Activated CD8-positive, alpha-beta T cell treated with anti-CD3 and anti-CD28 coated beads for 36 hours (primary cell): ENCODE measurements at regions of chr11 and their contacts with region 1.

Region 1: DNA sequence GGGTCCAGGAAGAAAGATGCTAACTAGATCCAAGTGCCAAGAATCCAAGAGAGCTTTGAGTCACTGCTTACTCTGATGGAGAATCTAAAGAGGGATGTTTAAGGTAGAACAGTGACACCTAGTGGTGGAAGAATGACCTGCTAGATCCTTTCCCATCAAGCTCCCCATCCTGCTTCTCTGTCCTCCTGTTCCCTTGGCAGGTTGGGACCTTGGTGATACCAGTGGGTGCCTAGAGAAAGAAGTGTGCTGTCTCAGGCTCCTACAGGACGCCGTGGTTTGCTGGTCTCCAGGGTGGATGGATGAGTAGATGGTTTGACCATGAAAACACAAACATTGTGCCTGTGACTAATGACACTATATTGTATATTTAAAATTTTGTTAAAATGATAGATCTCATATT is 383.7 kb downstream of the TMEM135 start:
- DNase-seq: peak; percentile 33
- ATAC-seq: peak; percentile 58
- H3K4me3 Mint-ChIP-seq: no peak overlapping the region
- H3K27ac Mint-ChIP-seq: no peak overlapping the region
- H3K4me1 Mint-ChIP-seq: no peaks in the 10 kb centered on the region
- H3K27me3 Mint-ChIP-seq: peaks cover 2% of the 10 kb centered on the region
- CTCF ChIP-seq: peak; percentile 68

Region 2: GRCh38 chr11:87352759-87353707 is 68.4 kb before region 1 on chr11:
- CTCF ChIA-PET with region 1: interaction called, 108 read pairs
- POLR2A ChIA-PET with region 1: no interaction called
- intact Hi-C with region 1: loop called (anchors 1 kb)
- DNase-seq: peak; percentile 89
- ATAC-seq: peak; percentile 95
- H3K4me3 Mint-ChIP-seq: no peak overlapping the region
- H3K27ac Mint-ChIP-seq: no peak overlapping the region
- H3K4me1 Mint-ChIP-seq: peaks cover 12% of the 10 kb centered on the region
- H3K27me3 Mint-ChIP-seq: peaks cover 12% of the 10 kb centered on the region
- CTCF ChIP-seq: peak; percentile 93

Region 3: DNA sequence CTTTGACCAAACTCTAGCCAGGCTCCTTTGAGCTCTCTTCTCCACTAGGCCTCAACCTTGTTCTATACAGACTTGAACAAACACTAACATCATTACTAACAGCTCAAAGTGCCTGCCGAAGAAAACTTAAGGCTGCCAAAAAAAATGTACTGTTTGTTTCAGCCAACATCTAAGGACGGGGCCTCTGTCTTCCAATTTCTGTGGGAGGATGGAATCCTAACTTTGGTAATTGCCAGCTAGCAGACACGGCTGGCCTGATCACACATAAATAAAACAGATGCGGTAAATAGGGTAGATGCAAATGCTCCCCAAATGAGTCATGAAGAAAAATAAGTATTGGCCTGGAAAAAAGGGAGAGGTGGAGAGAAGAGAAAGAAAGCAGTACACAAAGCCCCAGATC is 10.6 kb after region 1 on chr11:
- CTCF ChIA-PET with region 1: interaction called, 18 read pairs
- POLR2A ChIA-PET with region 1: no interaction called
- intact Hi-C with region 1: no loop called
- DNase-seq: no peak
- ATAC-seq: no peak
- H3K4me3 Mint-ChIP-seq: no peak overlapping the region
- H3K27ac Mint-ChIP-seq: no peak overlapping the region
- H3K4me1 Mint-ChIP-seq: no peaks in the 10 kb centered on the region
- H3K27me3 Mint-ChIP-seq: no peaks in the 10 kb centered on the region
- CTCF ChIP-seq: no peak